Right ventricle myocardium superior (tissue), 1 donor: ENCODE measurements at regions of chr20 and their contacts with region 1.

Region 1: GRCh38 chr20:37384683-37385174 is 38.8 kb downstream of the SRC start:
- DNase-seq: peak; percentile 83
- ATAC-seq: peak; percentile 91

Region 2: DNA sequence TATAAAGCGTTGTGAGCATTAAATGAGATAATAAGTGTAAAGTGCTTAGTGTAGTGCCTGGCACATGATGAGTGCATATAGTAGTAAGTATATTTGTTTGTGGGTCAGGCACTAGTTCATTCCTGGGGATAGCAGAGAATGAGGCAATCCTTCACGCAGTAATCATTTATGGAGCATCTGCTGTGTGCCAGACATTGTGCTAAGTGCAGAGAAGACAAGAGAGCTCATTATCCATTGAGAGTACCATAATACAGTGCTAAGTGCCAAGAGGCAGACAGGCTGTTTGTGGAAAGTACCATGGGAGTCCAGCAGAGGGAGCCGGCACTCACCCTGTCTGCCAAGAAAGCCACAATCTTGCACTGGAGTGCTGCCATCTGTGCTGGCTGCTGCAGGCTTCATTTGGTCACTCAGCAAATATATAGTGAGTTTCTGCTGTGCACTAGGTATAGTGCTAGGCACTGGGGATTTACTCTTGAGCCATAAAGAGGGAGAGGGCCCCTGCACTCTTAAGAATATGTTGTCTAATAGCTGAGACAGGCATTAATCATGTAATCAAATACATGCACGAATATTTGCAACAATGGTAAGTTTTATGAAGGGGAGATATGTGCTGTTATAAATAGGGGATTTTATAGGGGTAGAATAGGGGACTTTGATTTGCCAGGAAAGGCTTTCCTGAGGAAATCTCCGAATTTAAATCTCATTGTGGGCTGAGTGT is 192.4 kb before region 1 on chr20:
- intact Hi-C with region 1: loop called (anchors 10 kb)
- DNase-seq: peak; percentile 93
- ATAC-seq: peak; percentile 94

Region 3: DNA sequence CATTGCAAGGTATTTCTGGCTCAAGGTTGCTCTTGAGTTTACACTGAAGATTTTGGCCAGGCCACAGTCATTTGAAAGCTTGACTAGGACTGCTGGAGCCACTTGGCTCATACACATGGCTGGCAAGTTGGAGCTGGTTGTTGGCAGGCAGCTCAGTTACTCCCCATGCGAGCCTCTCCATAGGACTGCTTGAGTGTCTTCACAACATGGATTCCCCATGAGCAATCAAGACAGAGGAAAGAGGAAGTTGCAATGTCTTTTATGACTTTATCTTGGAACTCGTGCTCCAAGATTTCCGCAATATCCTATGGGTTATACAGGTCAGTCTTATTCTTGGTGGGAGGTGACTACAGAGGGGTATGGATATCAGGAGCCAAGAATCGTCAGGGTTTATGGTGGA is 96.6 kb before region 1 on chr20:
- intact Hi-C with region 1: loop called (anchors 5 kb)
- DNase-seq: peak; percentile 53
- ATAC-seq: no peak